Activated CD4-positive, alpha-beta T cell treated with anti-CD3 and anti-CD28 coated beads, Interleukin-2, amount 10 ng/mL, durations not matched to agents 24 days and 14 days (primary cell): ENCODE measurements at regions of chr1 and their contacts with region 1.

Region 1: DNA sequence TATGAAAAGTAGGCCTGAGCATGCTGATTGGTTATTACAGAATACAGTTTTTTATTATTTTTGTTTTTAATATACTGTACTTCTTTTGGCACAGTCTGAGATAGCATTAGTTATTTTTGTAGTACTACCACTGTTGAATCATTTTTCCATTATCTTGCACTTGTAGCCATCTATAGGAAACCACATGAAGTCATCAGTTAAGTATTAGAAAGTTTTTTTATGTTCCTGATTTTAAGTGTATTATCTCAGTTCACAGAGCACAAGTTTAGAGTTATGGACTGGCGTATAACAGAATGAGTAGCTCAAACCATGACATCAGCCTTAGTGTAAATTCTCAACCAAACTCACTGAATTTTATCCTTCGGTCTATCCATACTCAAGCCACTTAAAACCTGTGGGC is 22.8 kb downstream of the DHX9 start:
- DNase-seq: no peak
- H3K4me3 Mint-ChIP-seq: no peak overlapping the region
- H3K27ac Mint-ChIP-seq: peak overlapping the region; percentile 51
- H3K4me1 Mint-ChIP-seq: peaks cover 26% of the 10 kb centered on the region
- H3K27me3 Mint-ChIP-seq: no peaks in the 10 kb centered on the region

Region 2: GRCh38 chr1:182839209-182840065 is 22.6 kb before region 1 on chr1 and contains the start of gene DHX9:
- intact Hi-C with region 1: no loop called
- DNase-seq: peak; percentile 99
- H3K4me3 Mint-ChIP-seq: peak within 1 kb of the TSS; percentile 92
- H3K27ac Mint-ChIP-seq: peak within 1 kb of the TSS; percentile 94
- H3K4me1 Mint-ChIP-seq: peaks cover 37% of the 10 kb centered on the region
- H3K27me3 Mint-ChIP-seq: peaks cover 3% of the 10 kb centered on the region
- total RNA-seq, gene DHX9: 344 and 355 TPM in 2 replicates

Region 3: DNA sequence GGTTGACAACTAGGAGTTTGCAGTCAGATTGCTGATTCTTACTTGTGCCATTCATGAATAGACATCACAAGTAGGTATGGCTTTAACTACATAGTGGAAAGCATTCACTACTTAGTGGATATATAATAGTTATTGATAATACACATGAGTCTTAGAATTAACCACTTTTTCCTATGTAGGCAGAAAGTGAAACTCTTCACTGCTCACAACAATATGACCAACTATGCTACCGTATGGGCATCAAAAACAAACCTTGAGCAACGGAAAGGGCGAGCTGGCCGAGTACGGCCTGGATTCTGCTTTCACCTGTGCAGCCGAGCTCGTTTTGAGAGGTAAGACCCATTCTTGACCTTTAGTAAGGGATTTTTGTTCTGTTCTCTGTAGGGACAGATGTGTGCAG is 15.8 kb after region 1 on chr1:
- intact Hi-C with region 1: loop called (anchors 2 kb)
- DNase-seq: no peak
- H3K4me3 Mint-ChIP-seq: no peak overlapping the region
- H3K27ac Mint-ChIP-seq: peak overlapping the region; percentile 78
- H3K4me1 Mint-ChIP-seq: peaks cover 13% of the 10 kb centered on the region
- H3K27me3 Mint-ChIP-seq: no peaks in the 10 kb centered on the region

Region 4: GRCh38 chr1:183699616-183700160 is 837.7 kb after region 1 on chr1:
- intact Hi-C with region 1: no loop called
- DNase-seq: no peak
- H3K4me3 Mint-ChIP-seq: no peak overlapping the region
- H3K27ac Mint-ChIP-seq: no peak overlapping the region
- H3K4me1 Mint-ChIP-seq: peaks cover 8% of the 10 kb centered on the region
- H3K27me3 Mint-ChIP-seq: no peaks in the 10 kb centered on the region